ENCODE measurements at regions of chr11 and their contacts with region 1.

Region 1: GRCh38 chr11:107017433-107018227 is 646 bp downstream of the GUCY1A2 start:
- DNase-seq: peak; percentile 27 to 58 (median 40)
- H3K4me3 ChIP-seq: peak overlapping the region in 1 of 4 donors; percentile 71
- H3K27ac ChIP-seq: peak overlapping the region in 3 of 5 donors; percentile 12 to 83 (median 46)
- H3K4me1 ChIP-seq: peaks cover 7% of the 10 kb centered on the region in 2 donors
- H3K27me3 ChIP-seq: no peaks in the 10 kb centered on the region
- CTCF ChIP-seq: peak; percentile 28 to 59 (median 41)
- POLR2A ChIP-seq: no peak

Region 2: DNA sequence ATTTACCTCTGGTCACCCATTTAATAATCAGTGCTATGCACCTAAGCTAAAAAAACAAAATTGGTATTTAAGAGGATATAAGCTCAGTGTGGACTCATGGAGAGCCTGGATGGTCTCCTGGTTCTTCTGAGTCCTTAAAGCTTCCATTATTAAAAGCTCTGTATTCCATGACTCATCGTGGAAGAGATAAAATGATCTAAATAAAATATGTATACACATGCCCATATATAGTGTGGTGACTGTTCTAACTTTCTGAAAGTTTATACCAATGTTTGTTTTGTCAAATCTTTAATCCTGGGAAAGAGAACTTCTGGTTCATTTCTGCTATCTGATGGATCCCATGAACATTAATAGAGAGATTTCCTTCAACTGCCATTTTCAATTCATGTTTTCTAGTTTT is 375.3 kb before region 1 on chr11:
- intact Hi-C with region 1: no loop called
- DNase-seq: no peak
- H3K4me3 ChIP-seq: no peak overlapping the region
- H3K27ac ChIP-seq: no peak overlapping the region
- H3K4me1 ChIP-seq: no peaks in the 10 kb centered on the region
- H3K27me3 ChIP-seq: no peaks in the 10 kb centered on the region
- CTCF ChIP-seq: no peak
- POLR2A ChIP-seq: no peak

Region 3: DNA sequence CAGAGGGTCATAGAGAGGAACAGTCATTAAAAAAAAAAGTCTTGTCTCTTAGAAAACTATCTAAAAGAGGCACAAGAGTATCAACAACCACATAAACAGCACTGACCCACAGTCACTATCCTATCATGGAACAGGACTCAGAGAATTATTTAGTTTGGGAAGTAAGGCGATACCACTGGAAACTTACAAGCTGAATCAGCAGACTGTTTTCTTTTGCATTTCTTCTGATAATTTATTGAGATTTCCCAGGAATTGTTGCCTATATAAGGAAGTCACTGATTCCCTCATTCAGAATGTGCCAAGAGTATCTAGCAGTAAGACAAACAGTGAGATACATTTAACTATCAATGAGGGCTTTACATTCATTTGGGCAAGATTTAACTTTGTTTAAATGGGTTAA is 303.4 kb before region 1 on chr11:
- intact Hi-C with region 1: loop called in 1 of 2 experiments (anchors 10 kb)
- DNase-seq: no peak
- H3K4me3 ChIP-seq: no peak overlapping the region
- H3K27ac ChIP-seq: peak overlapping the region in 1 of 5 donors; percentile 29
- H3K4me1 ChIP-seq: no peaks in the 10 kb centered on the region
- H3K27me3 ChIP-seq: no peaks in the 10 kb centered on the region
- CTCF ChIP-seq: no peak
- POLR2A ChIP-seq: no peak

Region 4: DNA sequence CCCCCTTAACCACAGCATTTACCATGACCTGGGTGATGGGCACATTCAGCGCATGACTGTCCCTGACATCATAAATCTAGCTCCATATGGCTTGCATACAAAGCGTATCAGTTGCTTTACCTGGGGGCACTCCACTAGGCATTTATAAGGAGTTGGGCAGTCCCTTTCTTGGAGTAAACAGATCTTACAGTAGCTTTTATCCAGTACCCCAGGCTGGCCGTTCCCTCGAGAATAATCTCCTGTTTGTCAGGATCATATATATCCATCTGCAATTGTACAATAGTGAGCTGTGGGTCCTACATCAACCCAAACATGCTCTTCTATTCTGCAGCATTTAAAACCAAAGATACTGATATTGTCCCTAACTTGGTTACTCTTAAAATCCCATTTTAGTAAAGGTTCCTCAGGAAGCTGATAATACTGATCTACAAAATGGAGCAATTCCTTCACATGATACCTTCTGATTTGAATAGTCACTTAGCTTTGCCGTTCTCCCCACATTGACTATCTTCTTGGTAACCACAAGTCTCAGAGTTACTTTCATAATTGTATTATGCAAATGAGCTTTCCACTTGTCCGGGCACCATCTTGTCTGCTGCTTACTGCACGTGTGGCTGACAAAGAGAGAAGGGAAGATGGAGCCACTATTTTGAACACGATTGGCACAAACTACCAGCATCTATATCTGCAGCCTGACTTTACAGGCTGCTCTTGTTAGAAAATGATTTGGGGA is 235.0 kb after region 1 on chr11:
- intact Hi-C with region 1: no loop called
- DNase-seq: no peak
- H3K4me3 ChIP-seq: no peak overlapping the region
- H3K27ac ChIP-seq: no peak overlapping the region
- H3K4me1 ChIP-seq: no peaks in the 10 kb centered on the region
- H3K27me3 ChIP-seq: no peaks in the 10 kb centered on the region
- CTCF ChIP-seq: no peak
- POLR2A ChIP-seq: no peak

Measured in adrenal gland (tissue), 19 donors.